CD14-positive monocyte (primary cell): ENCODE measurements at regions of chr3 and their contacts with region 1.

Region 1: GRCh38 chr3:141184430-141184829 is 47.2 kb upstream of the PXYLP1 start:
- DNase-seq: no peak
- H3K4me3 ChIP-seq: no peak overlapping the region
- H3K4me3 Mint-ChIP-seq: no peak overlapping the region
- H3K27ac ChIP-seq: no peak overlapping the region
- H3K27ac Mint-ChIP-seq: no peak overlapping the region
- H3K4me1 ChIP-seq: no peaks in the 10 kb centered on the region
- H3K4me1 Mint-ChIP-seq: no peaks in the 10 kb centered on the region
- H3K27me3 ChIP-seq: no peaks in the 10 kb centered on the region
- H3K27me3 Mint-ChIP-seq: peaks cover 0 to 5% (median 2%) of the 10 kb centered on the region in 3 donors
- CTCF ChIP-seq: no peak

Region 2: DNA sequence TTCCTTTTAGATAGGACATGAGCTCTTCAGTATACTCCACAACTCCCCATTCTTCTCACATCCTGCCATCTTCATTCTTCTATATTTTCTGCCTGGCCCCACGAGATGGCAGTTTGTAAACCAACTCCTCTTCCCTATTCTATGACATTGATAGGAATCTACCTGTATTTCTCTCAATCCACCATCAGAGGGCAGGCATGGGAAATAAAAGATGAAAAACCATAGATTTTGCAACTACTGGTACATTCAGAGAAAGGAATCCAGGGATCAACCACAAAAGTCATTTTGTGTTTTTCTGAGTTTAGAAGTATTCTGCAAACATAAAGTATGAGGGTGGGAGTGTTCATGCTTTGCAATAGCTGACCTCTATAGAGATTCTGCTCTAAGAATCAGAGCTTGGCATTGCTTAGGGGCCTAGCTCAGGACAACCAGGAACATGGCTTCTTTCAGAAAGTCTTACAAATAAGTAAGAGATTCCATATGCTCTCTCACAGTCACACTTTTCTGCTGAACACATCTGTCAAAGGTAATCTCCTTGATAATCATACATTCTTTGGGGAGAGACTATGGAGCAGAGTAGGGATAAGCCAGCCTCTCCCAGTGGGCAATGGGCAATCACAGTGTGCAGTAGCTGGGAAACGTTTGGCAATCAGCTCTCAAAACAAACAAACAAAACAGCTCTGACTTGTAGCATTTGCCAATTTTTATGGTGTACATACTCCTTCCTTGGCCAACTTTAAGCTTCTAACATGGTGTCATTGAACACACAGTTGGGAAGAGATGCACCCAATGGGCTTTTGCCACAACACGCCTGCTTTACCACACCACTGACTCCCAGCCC is 285.9 kb before region 1 on chr3:
- intact Hi-C with region 1: loop called in 1 of 2 experiments (anchors 10 kb)
- DNase-seq: peak; percentile 17 to 35 (median 31)
- H3K4me3 ChIP-seq: no peak overlapping the region
- H3K4me3 Mint-ChIP-seq: no peak overlapping the region
- H3K27ac ChIP-seq: no peak overlapping the region
- H3K27ac Mint-ChIP-seq: no peak overlapping the region
- H3K4me1 ChIP-seq: no peaks in the 10 kb centered on the region
- H3K4me1 Mint-ChIP-seq: peaks cover 2% of the 10 kb centered on the region
- H3K27me3 ChIP-seq: no peaks in the 10 kb centered on the region
- H3K27me3 Mint-ChIP-seq: peaks cover 0 to 2% (median 0%) of the 10 kb centered on the region in 3 donors
- CTCF ChIP-seq: peak; percentile 74

Region 3: GRCh38 chr3:141250342-141250741 is 65.9 kb after region 1 on chr3:
- intact Hi-C with region 1: no loop called
- DNase-seq: no peak
- H3K4me3 ChIP-seq: no peak overlapping the region
- H3K4me3 Mint-ChIP-seq: no peak overlapping the region
- H3K27ac ChIP-seq: no peak overlapping the region
- H3K27ac Mint-ChIP-seq: peak overlapping the region in 1 of 7 donors; percentile 51
- H3K4me1 ChIP-seq: no peaks in the 10 kb centered on the region
- H3K4me1 Mint-ChIP-seq: peaks cover 13% of the 10 kb centered on the region
- H3K27me3 ChIP-seq: no peaks in the 10 kb centered on the region
- H3K27me3 Mint-ChIP-seq: no peaks in the 10 kb centered on the region
- CTCF ChIP-seq: no peak